Aorta (tissue), 5 donors: ENCODE measurements at regions of chr9 and their contacts with region 1.

Region 1: GRCh38 chr9:105414947-105415661 is 32.7 kb upstream of the FSD1L start:
- DNase-seq: no peak
- ATAC-seq: peak; percentile 85
- H3K4me3 ChIP-seq: no peak overlapping the region
- H3K27ac ChIP-seq: no peak overlapping the region
- H3K4me1 ChIP-seq: peaks cover 0 to 2% of the 10 kb centered on the region in 2 donors
- H3K27me3 ChIP-seq: no peaks in the 10 kb centered on the region

Region 2: GRCh38 chr9:104780799-104781395 is 634.2 kb before region 1 on chr9:
- intact Hi-C with region 1: loop called (anchors 10 kb)
- DNase-seq: no peak
- ATAC-seq: no peak
- H3K4me3 ChIP-seq: no peak overlapping the region
- H3K27ac ChIP-seq: no peak overlapping the region
- H3K4me1 ChIP-seq: peaks cover 0 to 6% of the 10 kb centered on the region in 2 donors
- H3K27me3 ChIP-seq: no peaks in the 10 kb centered on the region

Region 3: GRCh38 chr9:104863180-104863883 is 551.8 kb before region 1 on chr9:
- intact Hi-C with region 1: loop called (anchors 5 kb)
- DNase-seq: no peak
- ATAC-seq: peak; percentile 44
- H3K4me3 ChIP-seq: no peak overlapping the region
- H3K27ac ChIP-seq: no peak overlapping the region
- H3K4me1 ChIP-seq: peaks cover 0 to 4% of the 10 kb centered on the region in 2 donors
- H3K27me3 ChIP-seq: no peaks in the 10 kb centered on the region

Region 4: GRCh38 chr9:105168870-105169319 is 246.2 kb before region 1 on chr9:
- intact Hi-C with region 1: loop called in 1 of 2 experiments (anchors 10 kb)
- DNase-seq: no peak
- ATAC-seq: no peak
- H3K4me3 ChIP-seq: no peak overlapping the region
- H3K27ac ChIP-seq: no peak overlapping the region
- H3K4me1 ChIP-seq: no peaks in the 10 kb centered on the region
- H3K27me3 ChIP-seq: no peaks in the 10 kb centered on the region